ENCODE measurements at regions of chr9 and their contacts with region 1.

Region 1: GRCh38 chr9:131478421-131478868 is 24.3 kb upstream of the POMT1 start:
- DNase-seq: peak; percentile 34 to 49
- ATAC-seq: peak in 1 of 2 experiments; percentile 70; a peak in 3 of 6 replicates
- H3K4me3 ChIP-seq: no peak overlapping the region
- H3K27ac ChIP-seq: no peak overlapping the region
- H3K4me1 ChIP-seq: 0 out of 3 replicates have a peak, but pooled peaks cover under 1% of the 10 kb centered on the region
- CTCF ChIP-seq: peak; percentile 73
- EP300 ChIP-seq: no peak
- POLR2A ChIP-seq: no peak
- RAD21 ChIP-seq: peak; percentile 40 to 52

Region 2: GRCh38 chr9:131366761-131367401 is 111.6 kb before region 1 on chr9:
- CTCF ChIA-PET with region 1: interaction called, 13 read pairs
- POLR2A ChIA-PET with region 1: no interaction called
- DNase-seq: peak; percentile 65 to 89
- ATAC-seq: peak; percentile 93 to 95
- H3K4me3 ChIP-seq: no peak overlapping the region
- H3K27ac ChIP-seq: peak overlapping the region in 1 of 2 experiments; percentile 69; a peak in 3 of 6 replicates
- H3K4me1 ChIP-seq: peaks cover 16% of the 10 kb centered on the region
- CTCF ChIP-seq: peak; percentile 47
- EP300 ChIP-seq: no peak
- POLR2A ChIP-seq: no peak
- RAD21 ChIP-seq: peak; percentile 66 to 73

Region 3: GRCh38 chr9:131432597-131433306 is 45.7 kb before region 1 on chr9:
- CTCF ChIA-PET with region 1: interaction called, 10 read pairs
- POLR2A ChIA-PET with region 1: no interaction called
- DNase-seq: no peak
- ATAC-seq: peak; percentile 39 to 48; a peak in 3 of 6 replicates
- H3K4me3 ChIP-seq: no peak overlapping the region
- H3K27ac ChIP-seq: 0 out of 6 replicates have a peak overlapping the region, but pooled peaks of 1 of the 2 experiments have one; percentile 5
- H3K4me1 ChIP-seq: peaks cover 16% of the 10 kb centered on the region; the same call in 1 of the 3 replicates
- CTCF ChIP-seq: no peak
- EP300 ChIP-seq: no peak
- POLR2A ChIP-seq: no peak
- RAD21 ChIP-seq: no peak

Region 4: GRCh38 chr9:131464354-131465000 is 14.0 kb before region 1 on chr9:
- CTCF ChIA-PET with region 1: interaction called, 14 read pairs
- POLR2A ChIA-PET with region 1: no interaction called
- DNase-seq: no peak
- ATAC-seq: no peak
- H3K4me3 ChIP-seq: no peak overlapping the region
- H3K27ac ChIP-seq: no peak overlapping the region
- H3K4me1 ChIP-seq: no peaks in the 10 kb centered on the region
- CTCF ChIP-seq: no peak
- EP300 ChIP-seq: no peak
- POLR2A ChIP-seq: no peak
- RAD21 ChIP-seq: no peak

Region 5: DNA sequence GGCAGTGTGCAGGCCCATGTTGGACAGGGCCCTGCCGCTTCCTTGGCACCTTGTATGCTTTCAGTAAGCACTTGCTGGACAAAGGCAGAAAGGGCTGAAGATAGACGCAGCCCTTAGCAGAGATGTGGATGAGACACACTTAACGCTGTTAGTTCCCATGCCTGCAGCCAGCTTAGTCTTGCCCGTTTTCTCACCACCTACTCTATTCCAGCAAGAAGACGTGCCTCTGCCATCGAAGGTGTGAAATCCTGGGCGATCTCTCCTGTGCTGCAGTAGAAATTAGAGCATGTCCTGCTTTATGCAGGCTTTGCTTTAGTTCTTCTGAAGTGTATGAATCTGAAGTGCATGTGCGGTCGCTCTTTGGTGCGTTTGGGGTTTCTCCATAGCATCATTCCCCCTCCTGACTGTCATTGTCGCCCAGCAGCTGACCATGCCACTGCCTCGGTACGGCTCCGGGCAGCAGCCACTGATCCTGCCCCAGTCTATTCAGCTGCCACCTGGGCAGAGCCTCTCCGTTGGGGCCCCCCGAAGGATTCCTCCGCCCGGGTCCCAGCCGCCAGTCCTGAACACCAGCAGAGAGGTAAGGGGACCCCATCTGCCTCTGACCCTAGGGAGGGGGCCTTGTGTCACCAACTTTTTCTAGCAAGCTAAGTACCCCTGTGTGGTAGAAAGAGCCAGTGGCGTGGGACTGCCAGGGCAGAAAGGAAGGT is 12.7 kb after region 1 on chr9:
- CTCF ChIA-PET with region 1: interaction called, 35 read pairs
- POLR2A ChIA-PET with region 1: no interaction called
- DNase-seq: no peak
- ATAC-seq: no peak
- H3K4me3 ChIP-seq: no peak overlapping the region
- H3K27ac ChIP-seq: no peak overlapping the region
- H3K4me1 ChIP-seq: no peaks in the 10 kb centered on the region
- CTCF ChIP-seq: no peak
- EP300 ChIP-seq: no peak
- POLR2A ChIP-seq: no peak
- RAD21 ChIP-seq: no peak

Measured in A549 (cell line).